ENCODE measurements at regions of chr21 and their contacts with region 1.

Region 1: DNA sequence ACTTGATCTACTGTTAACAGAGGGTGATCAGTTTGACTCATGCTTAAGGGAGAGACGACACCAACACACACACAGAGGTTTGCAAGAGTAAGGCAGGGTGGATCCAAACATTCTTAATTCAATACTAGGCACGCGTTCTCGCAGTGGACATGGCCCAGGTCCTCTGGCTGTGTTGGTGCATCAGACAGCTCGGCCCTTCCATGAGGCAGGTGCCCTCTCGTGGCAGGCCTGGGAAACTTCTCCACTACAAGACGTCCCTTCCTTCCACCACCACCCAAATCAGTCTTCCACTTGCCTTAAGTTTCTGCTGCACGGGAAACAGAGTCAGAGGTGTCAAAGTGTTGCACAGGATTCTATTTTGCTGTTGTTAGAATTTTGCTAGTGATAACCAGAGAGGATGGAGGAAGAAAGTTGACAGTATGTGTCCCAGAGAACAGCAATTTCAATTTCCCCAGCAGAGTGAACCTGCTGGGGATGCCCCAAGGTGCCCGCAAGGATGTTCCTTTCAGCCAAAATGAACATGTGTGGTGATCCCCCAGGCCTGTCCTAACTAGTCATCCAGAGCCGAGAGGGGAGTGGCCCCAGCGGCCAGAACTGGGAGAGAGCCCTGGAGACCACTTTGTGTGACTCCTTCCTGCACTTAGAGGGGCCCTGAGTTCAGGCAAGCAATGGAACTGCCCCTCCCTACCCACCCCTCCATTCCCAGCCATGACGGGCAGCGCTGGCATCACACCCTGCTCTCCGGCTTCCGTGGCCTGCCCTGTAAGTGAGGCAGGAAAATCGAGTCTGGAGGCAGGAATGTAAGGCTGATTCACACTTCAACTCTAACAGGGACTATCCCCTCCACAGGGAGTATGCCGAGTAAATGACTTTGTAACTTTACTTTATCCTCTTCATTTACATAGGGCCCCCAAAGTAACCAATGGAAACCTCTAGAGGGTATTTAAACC is 34.8 kb downstream of the MX1 start:
- DNase-seq: peak; percentile 74 to 84 (median 79)
- ATAC-seq: peak; percentile 74
- H3K4me3 ChIP-seq: no peak overlapping the region
- H3K4me1 ChIP-seq: no peaks in the 10 kb centered on the region
- CTCF ChIP-seq: peak; percentile 74

Region 2: GRCh38 chr21:41283211-41283818 is 177.5 kb before region 1 on chr21:
- intact Hi-C with region 1: loop called in 1 of 2 experiments (anchors 5 kb)
- DNase-seq: peak in 1 of 3 donors; percentile 68
- ATAC-seq: peak; percentile 93
- H3K4me3 ChIP-seq: no peak overlapping the region
- H3K4me1 ChIP-seq: no peaks in the 10 kb centered on the region
- CTCF ChIP-seq: peak; percentile 55

Region 3: DNA sequence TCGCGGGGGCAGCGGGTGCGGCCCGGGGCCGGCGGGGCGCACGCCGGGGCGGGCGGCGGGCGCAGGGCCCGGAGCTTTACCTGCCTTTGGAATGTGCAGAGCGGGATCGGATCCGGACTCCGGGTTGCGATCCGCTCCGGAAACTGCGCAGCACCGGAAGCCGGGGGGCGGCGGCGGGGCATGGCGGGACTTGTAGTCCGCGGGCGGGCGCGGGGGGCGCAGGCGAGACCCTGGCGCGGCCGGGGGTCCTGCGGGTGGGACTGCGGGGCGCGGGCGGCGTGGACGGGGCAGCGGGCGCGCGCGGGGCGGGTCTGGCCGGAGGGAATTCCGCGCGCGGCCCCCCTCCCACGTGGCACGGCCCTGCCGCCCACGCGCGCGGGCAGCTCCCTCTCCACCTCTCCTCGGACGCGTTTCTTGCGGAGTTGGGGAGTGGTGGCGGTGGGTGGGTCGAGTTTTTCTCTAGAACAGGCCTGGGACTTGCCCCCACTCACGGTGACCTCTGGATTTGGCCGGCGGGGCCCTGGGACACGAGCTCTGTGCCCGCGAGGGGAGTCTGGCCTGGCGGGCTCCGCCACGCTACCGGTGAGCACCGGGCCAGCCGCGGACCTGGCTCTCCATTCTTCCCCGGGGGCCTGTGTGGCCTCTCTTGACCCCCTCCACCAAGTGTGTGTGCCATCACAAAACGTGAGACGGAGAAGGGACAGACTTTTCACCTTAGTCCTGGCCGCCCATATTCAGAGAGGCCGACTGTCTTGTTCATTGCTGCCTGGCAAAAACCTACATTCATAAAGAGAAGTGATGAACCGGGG is 418.5 kb after region 1 on chr21 and contains the start of gene PRDM15:
- intact Hi-C with region 1: no loop called
- DNase-seq: peak; percentile 84 to 88 (median 87)
- ATAC-seq: peak; percentile 78
- H3K4me3 ChIP-seq: peak within 1 kb of the TSS; percentile 50
- H3K4me1 ChIP-seq: peaks cover 8% of the 10 kb centered on the region
- CTCF ChIP-seq: no peak
- total RNA-seq, gene PRDM15: 7.4 to 10.3 (median 8.3) TPM

Measured in mucosa of descending colon (tissue), 3 donors.